BJ (cell line): ENCODE measurements at regions of chr3 and their contacts with region 1.

Region 1: DNA sequence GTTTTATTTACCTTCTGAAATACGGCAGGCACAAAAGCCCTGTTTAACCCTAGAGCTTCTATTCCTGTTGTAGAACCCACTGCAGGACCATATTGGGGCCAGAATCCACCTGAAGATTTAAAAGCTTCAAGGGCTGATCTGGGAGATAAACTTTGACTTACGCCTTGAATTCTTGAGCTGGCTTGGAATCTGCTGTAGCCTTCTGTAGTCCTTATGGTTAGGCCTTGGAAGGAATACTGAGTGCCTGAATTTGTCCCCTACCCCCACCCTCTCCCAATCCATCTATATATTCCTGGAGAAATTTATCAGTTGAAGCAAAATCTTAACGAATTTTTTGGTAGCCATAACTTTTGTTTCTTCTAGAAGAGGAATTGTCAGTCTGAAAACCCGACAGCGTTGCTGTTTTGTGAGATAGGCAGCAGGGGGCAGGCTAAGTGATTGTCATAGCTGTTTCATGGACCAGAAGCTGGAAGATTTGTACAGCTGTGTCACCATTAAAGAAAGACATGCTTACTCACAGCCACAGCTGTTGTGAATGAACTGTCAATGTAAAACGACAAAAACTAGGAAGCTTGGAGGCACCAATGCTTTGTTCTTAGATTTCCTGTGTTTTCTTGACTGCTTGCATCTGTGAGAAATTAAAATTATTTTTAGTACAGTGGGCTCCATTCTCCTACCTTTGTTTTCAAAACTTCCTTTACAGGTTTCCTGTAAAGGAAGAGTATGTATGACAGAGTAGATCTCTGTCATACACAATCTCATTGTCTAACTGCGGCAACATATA is 12.8 kb downstream of the LXN start:
- DNase-seq: no peak
- H3K4me3 ChIP-seq: no peak overlapping the region
- H3K27me3 ChIP-seq: no peaks in the 10 kb centered on the region
- CTCF ChIP-seq: peak; percentile 79

Region 2: GRCh38 chr3:158644345-158644908 is 15.2 kb before region 1 on chr3 and contains the start of gene GFM1:
- CTCF ChIA-PET with region 1: interaction called, 24 read pairs
- POLR2A ChIA-PET with region 1: no interaction called
- DNase-seq: peak; percentile 80
- H3K4me3 ChIP-seq: peak within 1 kb of the TSS; percentile 99
- H3K27me3 ChIP-seq: no peaks in the 10 kb centered on the region
- CTCF ChIP-seq: peak; percentile 94
- polyA plus RNA-seq, gene GFM1: 13.9 and 25.6 TPM in 2 replicates

Region 3: DNA sequence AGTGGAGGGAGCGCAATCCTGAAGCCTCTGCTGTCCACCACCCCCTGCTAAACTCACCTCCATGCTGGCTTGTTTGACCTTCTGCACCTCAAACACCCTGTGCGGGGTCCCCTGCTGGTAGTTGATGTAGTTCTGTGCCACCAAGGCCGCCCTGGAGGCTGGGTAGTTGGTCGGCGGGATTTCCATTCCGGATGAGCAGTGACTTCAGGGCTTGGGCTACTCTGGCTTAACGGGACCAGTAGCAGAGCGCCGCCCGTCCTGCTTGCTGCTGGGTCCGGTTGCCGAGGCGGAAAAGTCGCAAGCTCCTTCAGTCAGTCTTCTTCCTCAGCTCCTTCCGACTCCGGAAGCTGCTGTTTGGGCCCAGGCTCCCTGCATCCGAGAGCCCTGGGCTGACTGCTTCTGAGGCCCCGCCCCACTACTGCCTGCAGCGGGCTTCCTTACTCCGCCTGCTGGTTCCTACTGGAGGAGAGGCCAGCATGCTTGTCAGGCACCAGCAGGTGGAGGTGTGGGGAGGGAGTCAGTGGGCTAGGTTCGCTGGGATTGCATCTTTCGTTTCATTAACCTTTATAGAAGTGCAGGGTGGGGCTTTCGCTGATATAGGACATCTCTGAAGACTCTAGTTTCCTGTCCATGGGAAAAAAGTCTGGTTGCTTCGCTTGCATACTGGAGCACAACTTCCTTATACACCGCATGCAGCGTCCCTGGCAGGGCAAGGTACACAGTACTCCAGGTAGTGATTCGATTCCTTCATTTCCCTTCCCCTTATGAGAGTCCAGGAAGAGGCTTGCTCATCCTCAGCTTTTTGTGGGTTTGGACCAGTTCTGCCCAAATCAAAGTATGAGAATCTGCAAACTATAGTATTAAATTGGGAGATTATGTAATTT is 12.9 kb after region 1 on chr3 and contains the start of gene LXN:
- CTCF ChIA-PET with region 1: interaction called, 44 read pairs
- POLR2A ChIA-PET with region 1: no interaction called
- DNase-seq: peak; percentile 39
- H3K4me3 ChIP-seq: peak within 1 kb of the TSS; percentile 70
- H3K27me3 ChIP-seq: no peaks in the 10 kb centered on the region
- CTCF ChIP-seq: peak; percentile 93
- polyA plus RNA-seq, gene LXN: 56.2 and 66.8 TPM in 2 replicates

Region 4: DNA sequence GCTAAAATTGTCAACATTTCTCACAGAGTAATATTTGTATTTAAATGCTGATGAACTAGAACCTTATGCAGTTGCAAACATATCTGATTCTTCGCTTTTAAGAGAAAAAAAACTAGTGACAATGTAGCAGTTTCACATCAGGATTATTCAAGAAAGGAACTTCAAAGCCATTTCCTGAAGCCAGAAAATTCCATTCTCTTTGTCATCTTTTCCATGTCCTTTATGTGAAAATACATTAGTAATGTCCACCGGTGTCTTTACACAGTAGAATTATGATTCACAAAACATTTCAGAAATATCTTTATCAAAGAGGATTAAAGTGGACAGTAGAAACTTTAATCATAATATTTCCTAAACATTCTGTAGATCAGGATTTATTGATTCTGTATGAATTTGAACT is 25.5 kb after region 1 on chr3:
- CTCF ChIA-PET with region 1: interaction called, 3 read pairs
- POLR2A ChIA-PET with region 1: interaction called, 11 read pairs
- DNase-seq: no peak
- H3K4me3 ChIP-seq: no peak overlapping the region
- H3K27me3 ChIP-seq: no peaks in the 10 kb centered on the region
- CTCF ChIP-seq: no peak

Region 5: GRCh38 chr3:158727206-158728060 is 67.8 kb after region 1 on chr3:
- CTCF ChIA-PET with region 1: interaction called, 70 read pairs
- POLR2A ChIA-PET with region 1: no interaction called
- DNase-seq: no peak
- H3K4me3 ChIP-seq: no peak overlapping the region
- H3K27me3 ChIP-seq: no peaks in the 10 kb centered on the region
- CTCF ChIP-seq: peak; percentile 78

Region 6: GRCh38 chr3:158785972-158786371 is 126.3 kb after region 1 on chr3:
- CTCF ChIA-PET with region 1: interaction called, 153 read pairs
- POLR2A ChIA-PET with region 1: no interaction called
- DNase-seq: no peak
- H3K4me3 ChIP-seq: no peak overlapping the region
- H3K27me3 ChIP-seq: no peaks in the 10 kb centered on the region
- CTCF ChIP-seq: no peak

Region 7: DNA sequence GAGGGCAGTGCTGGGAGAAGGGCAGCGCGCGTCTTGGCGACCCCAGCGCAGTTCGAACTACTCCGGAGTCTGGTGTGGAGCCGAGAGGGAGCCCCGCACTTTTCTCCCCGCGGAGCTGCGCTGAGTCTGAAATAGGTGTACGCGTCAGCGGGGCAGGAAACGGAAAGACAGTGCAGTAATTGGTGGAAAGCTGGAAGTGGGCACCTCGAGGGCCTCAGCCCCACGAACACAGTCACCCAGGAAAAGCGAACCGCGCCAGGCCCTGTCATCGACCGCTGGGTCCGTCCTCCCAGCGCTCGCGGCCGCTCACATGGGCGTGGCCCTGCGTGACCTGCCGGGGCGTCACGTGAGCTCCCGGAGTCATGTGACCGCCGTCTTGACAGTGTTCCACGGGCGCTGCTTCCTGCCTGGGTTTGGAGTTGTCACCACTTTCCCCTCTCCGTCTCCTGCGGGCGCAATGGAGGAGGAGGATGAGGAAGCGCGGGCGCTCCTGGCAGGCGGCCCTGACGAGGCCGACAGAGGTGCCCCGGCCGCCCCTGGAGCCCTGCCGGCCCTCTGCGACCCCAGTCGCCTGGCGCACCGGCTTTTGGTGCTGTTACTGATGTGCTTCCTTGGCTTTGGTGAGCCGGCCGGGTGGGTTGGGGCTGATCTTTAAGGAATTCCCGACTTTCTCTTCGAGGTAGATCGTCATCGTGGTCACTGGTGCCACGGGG is 142.2 kb after region 1 on chr3 and contains the start of gene MFSD1:
- CTCF ChIA-PET with region 1: interaction called, 27 read pairs
- POLR2A ChIA-PET with region 1: no interaction called
- DNase-seq: peak; percentile 55
- H3K4me3 ChIP-seq: peak within 1 kb of the TSS; percentile 70
- H3K27me3 ChIP-seq: no peaks in the 10 kb centered on the region
- CTCF ChIP-seq: no peak
- polyA plus RNA-seq, gene MFSD1: 69.8 and 94.7 TPM in 2 replicates